ENCODE measurements at regions of chr12 and their contacts with region 1.

Region 1: GRCh38 chr12:27434673-27435565 is 11.6 kb upstream of the SMCO2 start:
- DNase-seq: peak in 1 of 6 donors; percentile 13
- ATAC-seq: peak; percentile 46 to 75 (median 64)
- H3K4me3 ChIP-seq: no peak overlapping the region
- H3K27ac ChIP-seq: no peak overlapping the region
- H3K4me1 ChIP-seq: no peaks in the 10 kb centered on the region
- H3K27me3 ChIP-seq: no peaks in the 10 kb centered on the region
- CTCF ChIP-seq: peak in 3 of 4 donors; percentile 12 to 52 (median 41)

Region 2: DNA sequence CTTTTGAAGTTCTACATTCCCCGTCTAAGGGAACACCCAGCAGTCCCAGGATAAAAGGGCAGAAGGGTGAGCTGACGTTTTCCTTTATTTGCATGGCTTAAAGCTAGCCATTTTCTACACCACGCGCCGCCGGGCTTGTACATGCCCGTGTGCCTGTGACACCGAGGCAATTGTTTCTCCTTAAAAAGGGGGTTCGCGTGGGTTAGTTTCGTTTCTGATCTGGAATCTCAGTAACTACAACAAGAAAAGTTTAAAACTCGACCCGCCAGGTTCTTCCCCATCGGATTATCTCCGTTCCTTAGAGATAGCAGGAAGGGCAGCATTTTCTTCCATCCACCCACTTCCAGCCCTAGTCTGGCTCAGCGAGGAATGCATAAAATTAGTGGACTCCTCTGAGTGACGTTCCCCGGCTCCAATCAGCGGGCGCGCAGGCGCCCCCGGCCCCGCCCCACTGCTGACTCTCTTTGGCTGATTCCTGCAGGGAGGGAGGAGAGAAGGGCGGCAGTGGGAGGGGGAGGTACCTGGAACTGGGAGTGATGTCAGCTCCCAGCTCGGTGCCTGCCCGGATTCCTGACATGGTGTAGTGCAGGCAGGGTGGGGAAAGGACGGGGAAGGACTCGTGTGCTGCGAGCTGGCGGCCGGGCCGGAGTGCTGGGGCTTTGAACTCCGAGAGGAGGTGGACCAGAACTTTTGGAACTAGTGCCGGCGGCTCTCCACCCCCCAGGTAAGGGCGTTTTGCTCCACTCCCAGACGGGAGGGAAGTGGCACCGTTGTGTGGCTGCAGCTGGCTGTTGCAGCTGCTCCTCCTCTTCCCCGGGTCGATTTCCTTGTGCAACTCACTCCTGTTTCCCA is 88.9 kb after region 1 on chr12 and contains the start of gene PPFIBP1:
- intact Hi-C with region 1: loop called in 1 of 3 experiments (anchors 10 kb)
- DNase-seq: peak; percentile 99 to 100 (median 100)
- ATAC-seq: peak; percentile 96 to 99 (median 98)
- H3K4me3 ChIP-seq: peak within 1 kb of the TSS; percentile 61 to 77 (median 70)
- H3K27ac ChIP-seq: peak within 1 kb of the TSS; percentile 92 to 96 (median 94)
- H3K4me1 ChIP-seq: peaks cover 7 to 9% (median 8%) of the 10 kb centered on the region in 3 donors
- H3K27me3 ChIP-seq: no peaks in the 10 kb centered on the region
- CTCF ChIP-seq: no peak
- total RNA-seq, gene PPFIBP1: 29.8 to 50.3 (median 34.7) TPM

Region 3: GRCh38 chr12:27549801-27550652 is 115.1 kb after region 1 on chr12:
- intact Hi-C with region 1: no loop called
- DNase-seq: peak; percentile 62 to 92 (median 80)
- ATAC-seq: peak; percentile 96 to 98 (median 97)
- H3K4me3 ChIP-seq: peak overlapping the region in 1 of 4 donors; percentile 6
- H3K27ac ChIP-seq: peak overlapping the region; percentile 39 to 80 (median 56)
- H3K4me1 ChIP-seq: peaks cover 16 to 31% (median 28%) of the 10 kb centered on the region in 3 donors
- H3K27me3 ChIP-seq: no peaks in the 10 kb centered on the region
- CTCF ChIP-seq: no peak

Region 4: GRCh38 chr12:27652174-27652763 is 217.3 kb after region 1 on chr12:
- intact Hi-C with region 1: loop called in 1 of 3 experiments (anchors 10 kb)
- DNase-seq: peak in 3 of 6 donors; percentile 32 to 60 (median 51)
- ATAC-seq: peak; percentile 77 to 92 (median 86)
- H3K4me3 ChIP-seq: no peak overlapping the region
- H3K27ac ChIP-seq: no peak overlapping the region
- H3K4me1 ChIP-seq: no peaks in the 10 kb centered on the region
- H3K27me3 ChIP-seq: no peaks in the 10 kb centered on the region
- CTCF ChIP-seq: peak; percentile 73 to 89 (median 82)